ENCODE measurements at regions of chr3 and their contacts with region 1.

Region 1: GRCh38 chr3:196073188-196073838 is 8.6 kb downstream of the TFRC start:
- DNase-seq: peak in 1 of 3 donors; percentile 57
- ATAC-seq: peak; percentile 93 to 99 (median 98)
- H3K4me3 ChIP-seq: no peak overlapping the region
- H3K27ac ChIP-seq: no peak overlapping the region
- H3K4me1 ChIP-seq: no peaks in the 10 kb centered on the region
- H3K27me3 ChIP-seq: no peaks in the 10 kb centered on the region
- CTCF ChIP-seq: peak; percentile 68 to 79 (median 76)
- POLR2A ChIP-seq: no peak

Region 2: GRCh38 chr3:196192036-196192523 is 118.8 kb after region 1 on chr3:
- intact Hi-C with region 1: loop called (anchors 5 kb)
- DNase-seq: no peak
- ATAC-seq: peak; percentile 20 to 37 (median 32)
- H3K4me3 ChIP-seq: no peak overlapping the region
- H3K27ac ChIP-seq: peak overlapping the region; percentile 15 to 54 (median 40)
- H3K4me1 ChIP-seq: peaks cover 0 to 23% (median 0%) of the 10 kb centered on the region in 4 donors
- H3K27me3 ChIP-seq: no peaks in the 10 kb centered on the region
- CTCF ChIP-seq: no peak
- POLR2A ChIP-seq: no peak

Region 3: GRCh38 chr3:196198771-196199753 is 125.7 kb after region 1 on chr3:
- intact Hi-C with region 1: loop called (anchors 5 kb)
- DNase-seq: no peak
- ATAC-seq: peak in 1 of 4 donors; percentile 9
- H3K4me3 ChIP-seq: no peak overlapping the region
- H3K27ac ChIP-seq: no peak overlapping the region
- H3K4me1 ChIP-seq: peaks cover 0 to 5% (median 0%) of the 10 kb centered on the region in 4 donors
- H3K27me3 ChIP-seq: no peaks in the 10 kb centered on the region
- CTCF ChIP-seq: peak in 2 of 4 donors; percentile 6 to 19
- POLR2A ChIP-seq: no peak

Region 4: DNA sequence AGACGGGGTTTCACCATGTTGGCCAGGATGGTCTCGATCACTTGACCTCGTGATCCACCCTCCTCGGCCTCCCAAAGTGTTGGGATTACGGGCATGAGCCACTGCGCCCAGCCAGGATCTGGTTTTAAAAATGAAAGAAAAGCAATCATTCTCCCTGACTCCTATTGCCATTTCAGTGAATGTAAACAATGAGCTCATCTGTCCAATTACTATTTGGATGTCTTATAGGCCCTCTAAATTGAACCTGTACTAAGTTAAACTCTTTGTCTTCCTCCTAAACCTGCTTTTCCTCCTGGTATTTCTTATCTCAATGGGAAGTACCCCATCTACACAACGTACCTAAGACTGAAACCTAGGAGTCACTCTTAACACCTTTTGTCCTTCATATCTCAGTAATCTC is 190.5 kb after region 1 on chr3:
- intact Hi-C with region 1: no loop called
- DNase-seq: no peak
- ATAC-seq: no peak
- H3K4me3 ChIP-seq: no peak overlapping the region
- H3K27ac ChIP-seq: no peak overlapping the region
- H3K4me1 ChIP-seq: peaks cover 0 to 1% (median 0%) of the 10 kb centered on the region in 4 donors
- H3K27me3 ChIP-seq: no peaks in the 10 kb centered on the region
- CTCF ChIP-seq: no peak
- POLR2A ChIP-seq: no peak

Measured in right lobe of liver (tissue), 6 donors.